GM12878 (cell line): ENCODE measurements at regions of chr1 and their contacts with region 1.

Region 1: GRCh38 chr1:9101510-9102146 is 27.3 kb downstream of the GPR157 start:
- DNase-seq: no peak
- ATAC-seq: peak; percentile 100
- H3K4me3 ChIP-seq: no peak overlapping the region
- H3K27ac ChIP-seq: no peak overlapping the region
- H3K4me1 ChIP-seq: no peaks in the 10 kb centered on the region
- H3K27me3 ChIP-seq: no peaks in the 10 kb centered on the region
- CTCF ChIP-seq: peak; percentile 78 to 90 (median 83)
- EP300 ChIP-seq: no peak
- POLR2A ChIP-seq: no peak
- RAD21 ChIP-seq: peak; percentile 86

Region 2: GRCh38 chr1:8817406-8818324 is 284.0 kb before region 1 on chr1 and contains the start of gene RERE:
- CTCF ChIA-PET with region 1: no interaction called
- POLR2A ChIA-PET with region 1: no interaction called
- RAD21 ChIA-PET with region 1: no interaction called
- SMC1A ChIA-PET with region 1: no interaction called
- in situ Hi-C with region 1: no loop called
- intact Hi-C with region 1: no loop called
- DNase-seq: peak; percentile 74
- ATAC-seq: peak; percentile 92
- H3K4me3 ChIP-seq: peak within 1 kb of the TSS; percentile 91
- H3K27ac ChIP-seq: peak within 1 kb of the TSS; percentile 95
- H3K4me1 ChIP-seq: no peaks in the 10 kb centered on the region
- H3K27me3 ChIP-seq: no peaks in the 10 kb centered on the region
- CTCF ChIP-seq: 0 out of 6 replicates have a peak, but pooled peaks of 1 of the 3 experiments have one; percentile 0
- EP300 ChIP-seq: no peak
- POLR2A ChIP-seq: peak; percentile 92
- RAD21 ChIP-seq: no peak
- polyA plus RNA-seq, gene RERE: 5.2 to 5.9 TPM

Region 3: GRCh38 chr1:8910914-8911313 is 190.7 kb before region 1 on chr1:
- CTCF ChIA-PET with region 1: interaction called, 3 read pairs
- POLR2A ChIA-PET with region 1: no interaction called
- RAD21 ChIA-PET with region 1: interaction called, 3 read pairs
- SMC1A ChIA-PET with region 1: interaction called, 5 read pairs
- in situ Hi-C with region 1: loop called (anchors 10 kb)
- intact Hi-C with region 1: no loop called
- DNase-seq: no peak
- ATAC-seq: no peak
- H3K4me3 ChIP-seq: no peak overlapping the region
- H3K27ac ChIP-seq: no peak overlapping the region
- H3K4me1 ChIP-seq: no peaks in the 10 kb centered on the region
- H3K27me3 ChIP-seq: peaks cover 0 to 3% of the 10 kb centered on the region in 2 experiments; a peak in 3 of 4 replicates
- CTCF ChIP-seq: no peak
- EP300 ChIP-seq: no peak
- POLR2A ChIP-seq: no peak
- RAD21 ChIP-seq: no peak

Region 4: DNA sequence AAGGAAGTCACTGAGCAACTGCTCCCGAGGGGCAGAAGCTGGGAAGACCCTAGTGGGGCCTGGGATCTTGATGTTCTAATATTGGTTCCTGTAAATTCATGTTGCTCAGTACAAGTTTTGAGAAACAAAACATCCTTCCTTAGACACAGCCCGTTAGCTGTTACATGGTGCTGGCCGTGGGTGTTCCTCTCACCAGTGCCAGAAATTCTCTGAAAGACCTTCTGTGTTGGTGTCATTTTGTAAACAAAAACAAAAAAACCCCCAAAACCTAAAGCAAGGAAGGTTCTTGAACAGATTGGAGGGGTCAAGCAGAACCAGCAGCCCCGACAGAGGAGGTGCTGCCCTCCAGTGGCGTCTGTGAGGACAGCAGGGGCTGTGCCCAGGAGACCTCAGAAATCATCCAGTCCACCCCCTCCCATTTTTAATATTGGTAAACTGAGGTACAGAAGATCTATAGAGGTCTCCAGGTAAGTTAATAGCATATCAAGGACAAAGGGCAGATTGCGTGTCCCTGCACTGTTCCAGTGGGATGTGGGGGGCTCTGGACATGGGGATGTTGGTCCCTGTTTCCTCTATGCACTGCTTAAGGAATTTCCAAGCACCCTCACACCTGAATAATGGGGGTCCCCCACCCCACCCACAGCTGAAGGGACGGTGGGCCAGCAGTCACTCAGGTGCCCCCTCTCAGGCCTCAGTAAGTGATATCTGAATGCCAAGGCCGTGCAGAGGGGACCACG is 113.6 kb before region 1 on chr1:
- CTCF ChIA-PET with region 1: interaction called, 24 read pairs
- POLR2A ChIA-PET with region 1: no interaction called
- RAD21 ChIA-PET with region 1: interaction called, 6 read pairs
- SMC1A ChIA-PET with region 1: interaction called, 4 read pairs
- in situ Hi-C with region 1: no loop called
- intact Hi-C with region 1: no loop called
- DNase-seq: no peak
- ATAC-seq: peak; percentile 92
- H3K4me3 ChIP-seq: no peak overlapping the region
- H3K27ac ChIP-seq: no peak overlapping the region
- H3K4me1 ChIP-seq: no peaks in the 10 kb centered on the region
- H3K27me3 ChIP-seq: no peaks in the 10 kb centered on the region
- CTCF ChIP-seq: peak; percentile 82 to 91 (median 91)
- EP300 ChIP-seq: no peak
- POLR2A ChIP-seq: no peak
- RAD21 ChIP-seq: peak; percentile 80

Region 5: GRCh38 chr1:9037476-9038337 is 63.9 kb before region 1 on chr1:
- CTCF ChIA-PET with region 1: interaction called, 12 read pairs
- POLR2A ChIA-PET with region 1: interaction called, 3 read pairs
- RAD21 ChIA-PET with region 1: interaction called, 5 read pairs
- SMC1A ChIA-PET with region 1: interaction called, 5 read pairs
- in situ Hi-C with region 1: no loop called
- intact Hi-C with region 1: no loop called
- DNase-seq: peak; percentile 56
- ATAC-seq: peak; percentile 89
- H3K4me3 ChIP-seq: no peak overlapping the region
- H3K27ac ChIP-seq: peak overlapping the region; percentile 89
- H3K4me1 ChIP-seq: peaks cover 27% of the 10 kb centered on the region
- H3K27me3 ChIP-seq: no peaks in the 10 kb centered on the region
- CTCF ChIP-seq: no peak
- EP300 ChIP-seq: peak; percentile 50 to 76; a peak in 3 of 4 replicates
- POLR2A ChIP-seq: peak; percentile 30; the same call in 1 of the 2 replicates
- RAD21 ChIP-seq: no peak

Region 6: GRCh38 chr1:9061252-9061960 is 40.2 kb before region 1 on chr1:
- CTCF ChIA-PET with region 1: interaction called, 13 read pairs
- POLR2A ChIA-PET with region 1: interaction called, 7 read pairs
- RAD21 ChIA-PET with region 1: interaction called, 6 read pairs
- SMC1A ChIA-PET with region 1: interaction called, 7 read pairs
- in situ Hi-C with region 1: no loop called
- intact Hi-C with region 1: no loop called
- DNase-seq: no peak
- ATAC-seq: peak; percentile 64
- H3K4me3 ChIP-seq: no peak overlapping the region
- H3K27ac ChIP-seq: peak overlapping the region; percentile 2; the same call in 1 of the 2 replicates
- H3K4me1 ChIP-seq: peaks cover 24% of the 10 kb centered on the region
- H3K27me3 ChIP-seq: no peaks in the 10 kb centered on the region
- CTCF ChIP-seq: no peak
- EP300 ChIP-seq: no peak
- POLR2A ChIP-seq: no peak
- RAD21 ChIP-seq: no peak

Region 7: DNA sequence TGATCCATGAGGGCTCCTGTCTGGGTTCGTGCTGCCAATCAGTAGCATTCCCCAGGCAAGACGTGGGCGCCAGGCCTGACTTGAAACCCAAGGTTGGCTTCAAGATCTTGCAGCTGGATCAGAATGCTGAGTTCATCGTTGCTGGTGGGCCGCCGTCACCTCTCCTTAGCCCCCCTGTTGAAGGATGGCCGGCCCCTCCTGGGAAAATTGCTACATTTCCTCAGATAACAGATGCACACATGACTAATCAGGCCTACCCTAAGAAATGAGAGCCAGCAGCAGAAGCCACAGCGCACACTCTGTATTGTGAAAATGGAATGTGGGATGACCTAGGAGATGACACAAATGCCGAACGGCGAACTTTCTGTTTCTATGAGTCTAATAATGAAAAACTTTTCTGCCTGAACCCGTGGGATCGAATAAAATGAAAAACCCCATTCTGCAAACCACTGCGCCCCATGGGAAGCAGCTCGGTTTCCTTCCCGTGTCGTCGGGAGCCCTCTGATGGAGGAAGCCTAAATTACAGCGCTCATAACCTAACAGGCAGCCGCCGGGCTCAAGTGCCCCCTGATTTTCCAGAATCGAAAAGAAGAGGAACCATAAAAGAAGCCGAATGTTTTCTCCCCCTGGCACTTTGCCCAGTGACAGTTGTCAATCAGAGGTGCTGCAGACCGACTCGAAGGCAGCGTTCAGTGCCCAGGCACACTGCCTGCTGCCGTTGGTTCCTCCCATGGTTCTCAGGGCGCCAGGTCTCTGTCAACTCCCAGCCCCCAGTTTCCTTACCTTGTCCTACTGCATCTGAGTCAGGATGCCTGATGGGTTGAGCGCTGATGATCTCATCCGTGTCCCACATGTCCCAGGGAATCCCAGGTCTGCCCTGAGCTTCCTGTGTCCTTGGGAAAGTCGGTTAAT is 94.8 kb after region 1 on chr1:
- CTCF ChIA-PET with region 1: interaction called, 5 read pairs
- POLR2A ChIA-PET with region 1: interaction called, 4 read pairs
- RAD21 ChIA-PET with region 1: interaction called, 10 read pairs
- SMC1A ChIA-PET with region 1: interaction called, 18 read pairs
- in situ Hi-C with region 1: no loop called
- intact Hi-C with region 1: no loop called
- DNase-seq: peak; percentile 67
- ATAC-seq: peak; percentile 74
- H3K4me3 ChIP-seq: peak overlapping the region; percentile 5; the same call in 1 of the 2 replicates
- H3K27ac ChIP-seq: peak overlapping the region; percentile 51
- H3K4me1 ChIP-seq: peaks cover 52% of the 10 kb centered on the region
- H3K27me3 ChIP-seq: peaks cover 0 to 21% of the 10 kb centered on the region in 2 experiments; a peak in 3 of 4 replicates
- CTCF ChIP-seq: peak; percentile 81 to 97 (median 86); a peak in 5 of 6 replicates
- EP300 ChIP-seq: peak in 1 of 2 experiments; percentile 61; a peak in 1 of 4 replicates
- POLR2A ChIP-seq: no peak
- RAD21 ChIP-seq: peak; percentile 96

Region 8: DNA sequence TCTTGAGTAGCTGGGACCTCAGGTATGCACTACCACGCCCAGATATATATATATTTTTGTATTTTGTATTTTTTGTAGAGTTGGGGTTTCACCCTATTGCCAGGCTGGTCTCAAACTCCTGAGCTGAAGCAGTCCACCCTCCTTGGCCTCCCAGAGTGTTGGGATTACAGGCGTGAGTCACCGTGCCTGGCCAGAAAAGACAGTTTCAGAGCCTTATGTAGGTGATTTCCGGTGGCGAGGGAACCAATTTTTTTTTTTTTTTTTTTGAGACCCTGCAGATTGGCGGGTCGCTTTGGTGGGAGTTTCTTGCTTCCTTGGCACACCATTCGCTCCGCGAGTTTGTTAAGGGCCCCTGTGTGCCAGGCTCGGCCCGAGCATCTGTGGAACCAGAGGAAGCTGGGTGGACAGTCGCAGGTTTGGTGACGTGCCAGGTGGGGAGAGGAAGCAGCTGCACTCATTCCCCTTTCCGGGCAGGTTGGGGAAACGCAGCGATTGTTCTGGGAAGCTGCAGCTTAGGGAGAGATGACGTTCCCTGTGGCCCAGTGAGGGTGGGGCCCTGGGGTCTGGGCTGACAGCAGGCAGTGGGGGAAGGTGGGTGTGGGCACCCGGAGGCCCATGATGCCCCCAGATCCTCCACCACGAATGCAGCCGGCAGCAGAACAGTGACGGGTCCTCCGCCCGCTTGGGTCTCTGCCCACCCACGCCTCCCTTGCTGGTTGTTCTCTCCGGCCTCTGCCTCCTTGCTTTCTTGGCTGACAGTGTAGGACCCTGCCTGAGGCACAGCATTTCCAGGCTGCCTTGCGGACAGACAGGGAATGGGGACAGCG is 216.2 kb after region 1 on chr1:
- CTCF ChIA-PET with region 1: no interaction called
- POLR2A ChIA-PET with region 1: no interaction called
- RAD21 ChIA-PET with region 1: no interaction called
- SMC1A ChIA-PET with region 1: no interaction called
- in situ Hi-C with region 1: no loop called
- intact Hi-C with region 1: no loop called
- DNase-seq: no peak
- ATAC-seq: no peak
- H3K4me3 ChIP-seq: no peak overlapping the region
- H3K27ac ChIP-seq: no peak overlapping the region
- H3K4me1 ChIP-seq: peaks cover 17% of the 10 kb centered on the region
- H3K27me3 ChIP-seq: peaks cover 0 to 2% of the 10 kb centered on the region in 2 experiments; a peak in 1 of 4 replicates
- CTCF ChIP-seq: no peak
- EP300 ChIP-seq: no peak
- POLR2A ChIP-seq: no peak
- RAD21 ChIP-seq: no peak